Heart left ventricle (tissue), 16 donors: ENCODE measurements at regions of chr1 and their contacts with region 1.

Region 1: DNA sequence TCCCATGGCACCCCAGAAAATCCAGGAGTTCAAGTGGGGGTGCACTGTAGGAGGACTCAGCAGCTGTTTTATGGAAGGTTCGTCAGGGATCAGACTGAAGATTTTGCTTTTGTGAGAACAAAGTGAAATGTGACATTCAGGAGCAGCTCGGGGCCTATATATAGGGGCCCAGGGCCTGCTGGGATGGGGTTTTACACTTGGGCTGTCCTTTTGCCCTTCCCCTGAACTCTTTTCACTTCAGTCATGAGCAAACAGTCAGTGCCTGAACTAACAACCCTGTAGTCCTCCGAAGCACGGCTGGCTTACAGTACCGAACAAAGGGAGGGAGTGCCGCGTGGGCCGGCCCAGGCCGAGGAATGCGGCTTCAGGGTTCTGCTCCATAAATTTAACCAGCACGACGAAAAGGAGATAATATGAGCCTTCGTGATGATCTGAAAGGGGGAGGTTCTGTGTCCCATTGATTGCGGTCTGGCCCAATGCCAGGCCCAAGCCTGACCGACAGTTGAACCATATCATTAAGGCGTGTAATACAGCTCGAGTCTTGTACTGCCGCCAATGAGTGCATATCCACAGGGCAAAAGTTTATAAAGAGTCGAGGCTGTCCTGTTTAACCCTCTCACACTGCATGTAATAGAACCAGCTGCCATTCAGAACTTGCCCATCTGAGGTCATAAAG is 139.9 kb downstream of the DHRS3 start:
- DNase-seq: peak; percentile 73 to 90 (median 78)
- ATAC-seq: peak; percentile 63 to 82 (median 76)
- H3K4me3 ChIP-seq: no peak overlapping the region
- H3K27ac ChIP-seq: peak overlapping the region; percentile 65 to 88 (median 80)
- H3K4me1 ChIP-seq: peaks cover 16 to 94% (median 79%) of the 10 kb centered on the region in 12 donors
- H3K27me3 ChIP-seq: no peaks in the 10 kb centered on the region
- CTCF ChIP-seq: no peak
- POLR2A ChIP-seq: no peak

Region 2: GRCh38 chr1:12339396-12339795 is 138.7 kb before region 1 on chr1:
- intact Hi-C with region 1: loop called in 1 of 10 experiments (anchors 10 kb)
- DNase-seq: peak in 2 of 5 donors; percentile 52 to 54
- ATAC-seq: peak; percentile 2 to 34 (median 12)
- H3K4me3 ChIP-seq: no peak overlapping the region
- H3K27ac ChIP-seq: peak overlapping the region; percentile 66 to 85 (median 76)
- H3K4me1 ChIP-seq: peaks cover 5 to 88% (median 69%) of the 10 kb centered on the region in 12 donors
- H3K27me3 ChIP-seq: no peaks in the 10 kb centered on the region
- CTCF ChIP-seq: peak in 6 of 12 donors; percentile 9 to 42 (median 16)
- POLR2A ChIP-seq: no peak

Region 3: GRCh38 chr1:12407050-12407961 is 70.8 kb before region 1 on chr1:
- intact Hi-C with region 1: loop called in 1 of 10 experiments (anchors 5 kb)
- DNase-seq: peak in 2 of 5 donors; percentile 27 to 32
- ATAC-seq: peak; percentile 62 to 82 (median 70)
- H3K4me3 ChIP-seq: no peak overlapping the region
- H3K27ac ChIP-seq: peak overlapping the region; percentile 31 to 75 (median 60)
- H3K4me1 ChIP-seq: peaks cover 6 to 53% (median 36%) of the 10 kb centered on the region in 12 donors
- H3K27me3 ChIP-seq: no peaks in the 10 kb centered on the region
- CTCF ChIP-seq: peak; percentile 7 to 69 (median 50)
- POLR2A ChIP-seq: no peak

Region 4: GRCh38 chr1:12434174-12434573 is 43.9 kb before region 1 on chr1:
- intact Hi-C with region 1: loop called in 2 of 10 experiments (anchors 5 kb)
- DNase-seq: no peak
- ATAC-seq: peak; percentile 29 to 64 (median 48)
- H3K4me3 ChIP-seq: no peak overlapping the region
- H3K27ac ChIP-seq: peak overlapping the region; percentile 30 to 86 (median 75)
- H3K4me1 ChIP-seq: peaks cover 14 to 72% (median 45%) of the 10 kb centered on the region in 12 donors
- H3K27me3 ChIP-seq: no peaks in the 10 kb centered on the region
- CTCF ChIP-seq: no peak
- POLR2A ChIP-seq: no peak

Region 5: GRCh38 chr1:12596007-12596821 is 118.1 kb after region 1 on chr1:
- intact Hi-C with region 1: loop called in 4 of 10 experiments (anchors 5 to 10 kb)
- DNase-seq: peak; percentile 82 to 95 (median 92)
- ATAC-seq: peak; percentile 31 to 76 (median 73)
- H3K4me3 ChIP-seq: peak overlapping the region in 11 of 12 donors; percentile 14 to 56 (median 42)
- H3K27ac ChIP-seq: peak overlapping the region; percentile 84 to 99 (median 90)
- H3K4me1 ChIP-seq: peaks cover 14 to 100% (median 89%) of the 10 kb centered on the region in 12 donors
- H3K27me3 ChIP-seq: no peaks in the 10 kb centered on the region
- CTCF ChIP-seq: no peak
- POLR2A ChIP-seq: peak in 1 of 2 donors; percentile 17

Region 6: GRCh38 chr1:12604114-12604874 is 126.2 kb after region 1 on chr1:
- intact Hi-C with region 1: loop called in 4 of 10 experiments (anchors 5 to 10 kb)
- DNase-seq: peak in 4 of 5 donors; percentile 60 to 76 (median 69)
- ATAC-seq: peak; percentile 81 to 91 (median 88)
- H3K4me3 ChIP-seq: no peak overlapping the region
- H3K27ac ChIP-seq: peak overlapping the region; percentile 22 to 93 (median 78)
- H3K4me1 ChIP-seq: peaks cover 24 to 72% (median 60%) of the 10 kb centered on the region in 12 donors
- H3K27me3 ChIP-seq: no peaks in the 10 kb centered on the region
- CTCF ChIP-seq: no peak
- POLR2A ChIP-seq: no peak

Region 7: GRCh38 chr1:12629521-12629956 is 151.5 kb after region 1 on chr1:
- intact Hi-C with region 1: no loop called
- DNase-seq: no peak
- ATAC-seq: no peak
- H3K4me3 ChIP-seq: no peak overlapping the region
- H3K27ac ChIP-seq: no peak overlapping the region
- H3K4me1 ChIP-seq: peaks cover 0 to 17% (median 5%) of the 10 kb centered on the region in 12 donors
- H3K27me3 ChIP-seq: no peaks in the 10 kb centered on the region
- CTCF ChIP-seq: no peak
- POLR2A ChIP-seq: no peak